ENCODE measurements at regions of chr1 and their contacts with region 1.

Region 1: GRCh38 chr1:39189592-39190041 is 14.9 kb upstream of the MACF1 start:
- DNase-seq: no peak
- H3K4me3 ChIP-seq: no peak overlapping the region
- H3K27ac ChIP-seq: no peak overlapping the region
- H3K4me1 ChIP-seq: peaks cover 0 to 8% (median 1%) of the 10 kb centered on the region in 4 experiments; a peak in 3 of 7 replicates
- H3K27me3 ChIP-seq: no peaks in the 10 kb centered on the region
- CTCF ChIP-seq: no peak
- EP300 ChIP-seq: no peak
- POLR2A ChIP-seq: no peak
- RAD21 ChIP-seq: no peak

Region 2: DNA sequence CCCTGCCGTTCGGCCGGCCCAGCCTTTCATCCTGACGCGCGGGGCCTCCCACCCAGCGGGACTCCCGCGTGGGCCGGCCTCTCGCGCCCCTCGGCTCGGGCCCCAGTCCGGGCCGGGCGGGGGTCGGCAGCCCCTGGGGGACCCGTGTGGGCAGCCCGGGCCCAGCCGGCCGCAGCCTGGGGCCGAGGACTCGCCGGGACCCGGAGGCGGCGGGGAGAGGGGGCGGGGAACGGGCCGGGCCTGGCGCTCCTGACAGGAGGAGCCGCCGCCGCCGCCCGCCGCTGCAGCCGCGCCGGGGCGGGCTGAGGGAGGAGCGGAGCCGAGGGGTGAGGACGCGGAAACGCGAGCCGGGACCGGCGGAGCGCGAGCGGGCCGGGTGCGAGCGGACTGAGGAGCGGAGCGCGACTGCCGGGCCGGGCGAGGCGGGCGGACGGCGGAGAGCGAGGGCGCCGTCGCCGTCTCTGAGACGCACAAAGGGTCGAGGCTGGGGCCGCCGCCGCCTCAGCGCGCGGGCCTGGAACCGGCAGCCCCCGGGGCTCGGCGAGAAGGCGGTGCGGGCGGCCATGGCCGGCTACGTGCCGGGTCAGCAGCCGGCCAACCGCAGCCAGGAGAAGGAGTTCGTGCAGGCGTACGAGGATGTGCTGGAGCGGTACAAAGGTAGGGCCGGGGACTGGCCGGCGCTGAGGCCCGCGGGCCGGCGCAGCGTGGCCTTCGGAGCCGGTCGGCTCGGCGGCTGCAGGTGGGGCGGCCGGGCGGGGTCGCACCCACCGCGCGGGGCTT is 84.4 kb before region 1 on chr1:
- CTCF ChIA-PET with region 1: interaction called, 130 read pairs
- POLR2A ChIA-PET with region 1: interaction called, 20 read pairs
- DNase-seq: peak in 1 of 2 experiments; percentile 67
- H3K4me3 ChIP-seq: peak overlapping the region; percentile 84 to 94 (median 92)
- H3K27ac ChIP-seq: peak overlapping the region; percentile 86
- H3K4me1 ChIP-seq: peaks cover 23 to 37% (median 25%) of the 10 kb centered on the region in 4 experiments
- H3K27me3 ChIP-seq: no peaks in the 10 kb centered on the region
- CTCF ChIP-seq: no peak
- EP300 ChIP-seq: no peak
- POLR2A ChIP-seq: no peak
- RAD21 ChIP-seq: no peak

Region 3: GRCh38 chr1:39158327-39159086 is 31.1 kb before region 1 on chr1:
- CTCF ChIA-PET with region 1: interaction called, 97 read pairs
- POLR2A ChIA-PET with region 1: interaction called, 8 read pairs
- DNase-seq: no peak
- H3K4me3 ChIP-seq: peak overlapping the region; percentile 21 to 44 (median 34); a peak in 7 of 8 replicates
- H3K27ac ChIP-seq: peak overlapping the region; percentile 48
- H3K4me1 ChIP-seq: peaks cover 13 to 37% (median 25%) of the 10 kb centered on the region in 4 experiments; a peak in 6 of 7 replicates
- H3K27me3 ChIP-seq: no peaks in the 10 kb centered on the region
- CTCF ChIP-seq: peak in 1 of 3 experiments; percentile 1; a peak in 1 of 4 replicates
- EP300 ChIP-seq: no peak
- POLR2A ChIP-seq: peak in 1 of 2 experiments; percentile 62; a peak in 1 of 3 replicates
- RAD21 ChIP-seq: no peak

Region 4: GRCh38 chr1:39204441-39205081 is 14.9 kb after region 1 on chr1 and contains the start of gene MACF1:
- CTCF ChIA-PET with region 1: interaction called, 78 read pairs
- POLR2A ChIA-PET with region 1: interaction called, 5 read pairs
- DNase-seq: no peak
- H3K4me3 ChIP-seq: peak within 1 kb of the TSS in 1 of 4 experiments; percentile 19; a peak in 3 of 8 replicates
- H3K27ac ChIP-seq: no peak within 1 kb of the TSS; the same call in 1 of the 2 replicates
- H3K4me1 ChIP-seq: peaks cover 8 to 15% (median 10%) of the 10 kb centered on the region in 4 experiments; a peak in 6 of 7 replicates
- H3K27me3 ChIP-seq: no peaks in the 10 kb centered on the region
- CTCF ChIP-seq: peak in 1 of 3 experiments; percentile 6; a peak in 1 of 4 replicates
- EP300 ChIP-seq: no peak
- POLR2A ChIP-seq: no peak
- RAD21 ChIP-seq: peak in 1 of 2 experiments; percentile 24; a peak in 1 of 4 replicates
- total RNA-seq, gene MACF1: 261 and 285 TPM in 2 replicates

Region 5: DNA sequence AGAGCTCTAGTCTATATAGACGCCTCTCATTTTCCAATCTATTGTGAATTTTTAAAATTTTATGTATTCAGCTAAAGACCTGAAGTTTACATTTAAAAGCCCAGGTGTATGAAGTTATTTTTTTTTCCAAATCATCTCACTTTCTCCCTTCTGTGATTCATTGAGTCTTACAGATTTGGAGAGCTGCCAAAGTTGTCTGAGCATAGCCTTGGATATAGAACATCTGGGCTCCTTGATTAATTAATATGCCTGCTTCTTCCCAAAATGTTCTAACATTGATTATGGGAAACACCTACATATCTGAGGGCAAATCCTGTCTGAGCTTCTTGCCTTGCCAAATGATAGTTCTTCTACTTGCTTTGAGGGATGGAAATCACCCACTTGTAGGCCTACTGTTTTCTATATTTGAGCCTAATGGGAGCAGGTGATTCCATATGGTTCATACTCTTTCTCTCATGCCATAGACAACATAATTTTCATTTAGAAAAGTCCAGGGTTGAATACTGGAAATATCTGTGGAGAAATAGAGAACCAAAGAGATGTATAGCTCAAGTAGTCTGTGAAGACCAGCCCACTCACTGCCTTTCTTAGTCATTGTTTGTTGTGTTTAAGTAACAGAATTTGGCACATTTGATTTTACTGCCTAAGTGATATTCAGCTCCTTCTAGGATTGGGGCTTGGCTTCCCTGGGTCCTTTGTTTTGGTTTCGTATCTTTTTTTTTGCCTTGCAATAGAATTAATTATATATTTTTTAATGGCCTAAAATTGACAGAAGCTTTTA is 61.0 kb after region 1 on chr1:
- CTCF ChIA-PET with region 1: interaction called, 16 read pairs
- POLR2A ChIA-PET with region 1: no interaction called
- DNase-seq: no peak
- H3K4me3 ChIP-seq: no peak overlapping the region
- H3K27ac ChIP-seq: no peak overlapping the region
- H3K4me1 ChIP-seq: no peaks in the 10 kb centered on the region
- H3K27me3 ChIP-seq: no peaks in the 10 kb centered on the region
- CTCF ChIP-seq: no peak
- EP300 ChIP-seq: no peak
- POLR2A ChIP-seq: no peak
- RAD21 ChIP-seq: no peak

Region 6: GRCh38 chr1:39422614-39423013 is 233.0 kb after region 1 on chr1:
- CTCF ChIA-PET with region 1: no interaction called
- POLR2A ChIA-PET with region 1: no interaction called
- DNase-seq: no peak
- H3K4me3 ChIP-seq: no peak overlapping the region
- H3K27ac ChIP-seq: no peak overlapping the region
- H3K4me1 ChIP-seq: no peaks in the 10 kb centered on the region
- H3K27me3 ChIP-seq: no peaks in the 10 kb centered on the region
- CTCF ChIP-seq: no peak
- EP300 ChIP-seq: no peak
- POLR2A ChIP-seq: no peak
- RAD21 ChIP-seq: no peak